ACHN (cell line): ENCODE measurements at regions of chr10 and their contacts with region 1.

Region 1: GRCh38 chr10:72319416-72320254 is 35.1 kb downstream of the DNAJB12 start:
- DNase-seq: peak; percentile 95

Region 2: GRCh38 chr10:72124989-72125388 is 194.6 kb before region 1 on chr10:
- in situ Hi-C with region 1: loop called (anchors 25 kb)
- DNase-seq: no peak

Region 3: GRCh38 chr10:72146071-72146470 is 173.6 kb before region 1 on chr10:
- in situ Hi-C with region 1: no loop called
- DNase-seq: peak; percentile 90

Region 4: DNA sequence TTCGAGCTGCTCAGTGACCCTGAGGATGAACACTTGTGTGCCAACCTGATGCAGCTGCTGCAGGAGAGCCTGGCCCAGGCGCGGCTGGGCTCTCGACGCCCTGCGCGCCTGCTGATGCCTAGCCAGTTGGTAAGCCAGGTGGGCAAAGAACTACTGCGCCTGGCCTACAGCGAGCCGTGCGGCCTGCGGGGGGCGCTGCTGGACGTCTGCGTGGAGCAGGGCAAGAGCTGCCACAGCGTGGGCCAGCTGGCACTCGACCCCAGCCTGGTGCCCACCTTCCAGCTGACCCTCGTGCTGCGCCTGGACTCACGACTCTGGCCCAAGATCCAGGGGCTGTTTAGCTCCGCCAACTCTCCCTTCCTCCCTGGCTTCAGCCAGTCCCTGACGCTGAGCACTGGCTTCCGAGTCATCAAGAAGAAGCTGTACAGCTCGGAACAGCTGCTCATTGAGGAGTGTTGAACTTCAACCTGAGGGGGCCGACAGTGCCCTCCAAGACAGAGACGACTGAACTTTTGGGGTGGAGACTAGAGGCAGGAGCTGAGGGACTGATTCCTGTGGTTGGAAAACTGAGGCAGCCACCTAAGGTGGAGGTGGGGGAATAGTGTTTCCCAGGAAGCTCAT is 44.8 kb before region 1 on chr10:
- in situ Hi-C with region 1: loop called (anchors 5 kb)
- DNase-seq: peak; percentile 75